ENCODE measurements at regions of chr19 and their contacts with region 1.

Region 1: GRCh38 chr19:44113138-44113783 is at the start of gene ZNF225:
- DNase-seq: peak; percentile 99
- H3K4me3 ChIP-seq: peak within 1 kb of the TSS; percentile 72
- H3K27ac ChIP-seq: peak within 1 kb of the TSS; percentile 65 to 72
- H3K4me1 ChIP-seq: no peaks in the 10 kb centered on the region
- H3K27me3 ChIP-seq: no peaks in the 10 kb centered on the region
- CTCF ChIP-seq: peak in 1 of 4 experiments; percentile 37
- POLR2A ChIP-seq: no peak
- total RNA-seq, gene ZNF225: 3.0 to 4.9 TPM

Region 2: GRCh38 chr19:43318796-43319314 is 794.4 kb before region 1 on chr19:
- intact Hi-C with region 1: no loop called
- DNase-seq: no peak
- H3K4me3 ChIP-seq: no peak overlapping the region
- H3K27ac ChIP-seq: no peak overlapping the region
- H3K4me1 ChIP-seq: no peaks in the 10 kb centered on the region
- H3K27me3 ChIP-seq: no peaks in the 10 kb centered on the region
- CTCF ChIP-seq: no peak
- POLR2A ChIP-seq: no peak

Region 3: GRCh38 chr19:44051654-44052402 is 61.4 kb before region 1 on chr19 and contains the start of gene ZNF223:
- intact Hi-C with region 1: loop called (anchors 2 kb)
- DNase-seq: peak; percentile 97
- H3K4me3 ChIP-seq: peak within 1 kb of the TSS; percentile 67 to 82
- H3K27ac ChIP-seq: peak within 1 kb of the TSS; percentile 75 to 77
- H3K4me1 ChIP-seq: no peaks in the 10 kb centered on the region
- H3K27me3 ChIP-seq: no peaks in the 10 kb centered on the region
- CTCF ChIP-seq: peak in 1 of 4 experiments; percentile 8
- POLR2A ChIP-seq: no peak
- total RNA-seq, gene ZNF223: 9.1 to 10.6 TPM

Region 4: GRCh38 chr19:44164673-44165512 is 51.6 kb after region 1 on chr19 and contains the start of gene ZNF226:
- intact Hi-C with region 1: loop called (anchors 5 kb)
- DNase-seq: peak; percentile 97
- H3K4me3 ChIP-seq: peak within 1 kb of the TSS; percentile 71 to 84
- H3K27ac ChIP-seq: peak within 1 kb of the TSS; percentile 80 to 88
- H3K4me1 ChIP-seq: peaks cover 6% of the 10 kb centered on the region
- H3K27me3 ChIP-seq: no peaks in the 10 kb centered on the region
- CTCF ChIP-seq: no peak
- POLR2A ChIP-seq: peak; percentile 55
- total RNA-seq, gene ZNF226: 35.9 to 48.4 TPM

Region 5: DNA sequence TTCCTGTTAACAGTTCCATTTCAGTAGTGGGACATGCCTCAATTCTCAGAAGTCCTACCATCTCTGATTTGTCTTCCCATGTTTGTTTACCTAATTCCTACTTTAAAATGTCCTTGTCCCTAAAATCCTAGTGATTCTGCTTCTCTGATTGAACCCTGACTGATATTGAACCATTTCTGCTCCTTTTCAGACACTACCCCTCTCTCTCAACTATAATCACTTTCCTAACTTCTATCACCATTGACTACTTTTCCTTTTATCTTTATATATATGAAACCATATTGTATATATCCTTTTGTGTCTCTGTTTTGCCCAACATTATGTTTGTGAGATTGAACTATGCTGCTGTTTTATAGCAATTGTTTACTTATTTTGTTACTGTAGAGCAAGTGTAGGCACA is 83.5 kb after region 1 on chr19:
- intact Hi-C with region 1: no loop called
- DNase-seq: no peak
- H3K4me3 ChIP-seq: no peak overlapping the region
- H3K27ac ChIP-seq: no peak overlapping the region
- H3K4me1 ChIP-seq: no peaks in the 10 kb centered on the region
- H3K27me3 ChIP-seq: no peaks in the 10 kb centered on the region
- CTCF ChIP-seq: no peak
- POLR2A ChIP-seq: no peak

Region 6: DNA sequence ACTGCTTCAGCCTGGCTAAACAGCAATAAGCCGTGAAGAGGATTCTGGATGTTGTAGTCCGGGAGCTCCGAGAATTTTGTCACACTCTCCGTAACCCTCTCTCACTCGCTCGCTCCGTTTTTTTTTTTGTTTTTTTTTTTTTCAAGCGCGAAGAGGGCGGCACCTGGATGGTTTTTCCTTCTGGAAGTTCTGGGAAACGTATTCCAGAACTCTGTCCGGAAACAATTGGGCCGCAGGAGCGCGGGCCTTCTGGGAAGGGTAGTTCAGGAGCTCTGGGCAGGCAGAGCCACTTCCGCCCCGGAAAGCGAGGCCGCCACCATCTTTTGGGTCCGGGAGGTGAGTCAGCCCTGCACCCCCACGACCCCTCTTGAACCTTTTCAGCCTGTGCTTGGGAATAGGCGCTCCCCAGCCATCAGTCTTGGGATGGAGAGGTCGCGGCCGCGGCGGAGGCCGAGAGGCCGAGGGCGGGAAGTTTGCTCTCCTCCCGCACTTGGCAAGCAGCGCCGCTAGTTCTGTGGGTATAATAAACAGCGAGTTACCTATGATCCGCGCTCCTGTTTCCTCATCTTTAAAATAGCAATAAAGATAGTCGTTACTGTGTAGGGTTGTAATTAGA is 99.1 kb after region 1 on chr19 and contains the start of gene ZNF227:
- intact Hi-C with region 1: loop called (anchors 5 kb)
- DNase-seq: peak; percentile 93
- H3K4me3 ChIP-seq: peak within 1 kb of the TSS; percentile 69 to 73
- H3K27ac ChIP-seq: peak within 1 kb of the TSS; percentile 87 to 88
- H3K4me1 ChIP-seq: no peaks in the 10 kb centered on the region
- H3K27me3 ChIP-seq: no peaks in the 10 kb centered on the region
- CTCF ChIP-seq: peak in 1 of 4 experiments; percentile 0
- POLR2A ChIP-seq: peak; percentile 23
- total RNA-seq, gene ZNF227: 17.0 to 26.4 TPM